Transverse colon (tissue), 4 donors: ENCODE measurements at regions of chr7 and their contacts with region 1.

Region 1: GRCh38 chr7:116588641-116589594 is 64.1 kb downstream of the CAV1 start:
- DNase-seq: no peak
- H3K4me3 ChIP-seq: no peak overlapping the region
- H3K27ac ChIP-seq: peak overlapping the region in 2 of 4 donors; percentile 8 to 23
- H3K4me1 ChIP-seq: peaks cover 13 to 42% (median 22%) of the 10 kb centered on the region in 4 donors
- H3K27me3 ChIP-seq: no peaks in the 10 kb centered on the region
- CTCF ChIP-seq: peak; percentile 69 to 81 (median 74)
- EP300 ChIP-seq: no peak
- POLR2A ChIP-seq: no peak

Region 2: GRCh38 chr7:116173051-116174028 is 415.6 kb before region 1 on chr7:
- in situ Hi-C with region 1: loop called in 2 of 4 experiments (anchors 10 kb)
- intact Hi-C with region 1: loop called (anchors 10 kb)
- DNase-seq: no peak
- H3K4me3 ChIP-seq: no peak overlapping the region
- H3K27ac ChIP-seq: no peak overlapping the region
- H3K4me1 ChIP-seq: peaks cover 0 to 15% (median 6%) of the 10 kb centered on the region in 4 donors
- H3K27me3 ChIP-seq: no peaks in the 10 kb centered on the region
- CTCF ChIP-seq: peak; percentile 43 to 71 (median 51)
- EP300 ChIP-seq: no peak
- POLR2A ChIP-seq: no peak

Region 3: DNA sequence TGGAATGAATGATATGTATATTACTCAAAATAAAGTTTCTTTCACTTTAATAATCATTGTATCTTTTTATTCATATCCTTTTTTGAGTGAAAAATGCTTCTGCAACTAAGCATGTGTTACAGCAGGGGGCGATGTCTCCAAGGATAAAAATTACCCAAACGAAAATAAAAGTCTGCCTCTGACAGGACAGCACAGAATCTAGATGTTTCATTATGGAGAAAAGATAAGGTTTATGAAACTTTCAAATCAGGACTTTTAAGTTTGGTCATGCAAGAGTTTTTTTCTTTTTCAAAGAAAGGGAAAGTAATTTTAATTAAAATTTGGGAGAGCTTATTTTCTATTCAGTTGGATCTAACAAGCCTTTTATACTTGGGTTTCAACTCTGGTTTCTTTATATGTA is 330.2 kb before region 1 on chr7:
- in situ Hi-C with region 1: loop called (anchors 5 to 25 kb)
- intact Hi-C with region 1: loop called (anchors 2 kb)
- DNase-seq: no peak
- H3K4me3 ChIP-seq: no peak overlapping the region
- H3K27ac ChIP-seq: peak overlapping the region in 3 of 4 donors; percentile 11 to 50 (median 19)
- H3K4me1 ChIP-seq: peaks cover 0 to 8% (median 4%) of the 10 kb centered on the region in 4 donors
- H3K27me3 ChIP-seq: no peaks in the 10 kb centered on the region
- CTCF ChIP-seq: peak; percentile 76 to 91 (median 82)
- EP300 ChIP-seq: no peak
- POLR2A ChIP-seq: no peak

Region 4: GRCh38 chr7:116525913-116526861 is 62.7 kb before region 1 on chr7:
- in situ Hi-C with region 1: no loop called
- intact Hi-C with region 1: loop called (anchors 10 kb)
- DNase-seq: peak; percentile 80
- H3K4me3 ChIP-seq: peak overlapping the region; percentile 49 to 65 (median 62)
- H3K27ac ChIP-seq: peak overlapping the region; percentile 81 to 92 (median 90)
- H3K4me1 ChIP-seq: peaks cover 0 to 32% (median 19%) of the 10 kb centered on the region in 4 donors
- H3K27me3 ChIP-seq: peaks cover 55% of the 10 kb centered on the region
- CTCF ChIP-seq: peak; percentile 1 to 80 (median 75)
- EP300 ChIP-seq: no peak
- POLR2A ChIP-seq: no peak